HAP-1 (cell line): ENCODE measurements at regions of chr3 and their contacts with region 1.

Region 1: GRCh38 chr3:160038862-160039562 is 50.4 kb downstream of the IL12A start:
- DNase-seq: peak in 1 of 2 experiments; percentile 55
- H3K4me3 ChIP-seq: peak overlapping the region; percentile 9
- H3K4me1 ChIP-seq: no peaks in the 10 kb centered on the region; the same call in 1 of the 2 replicates
- H3K27me3 ChIP-seq: no peaks in the 10 kb centered on the region

Region 2: GRCh38 chr3:160343132-160343531 is 304.1 kb after region 1 on chr3:
- in situ Hi-C with region 1: loop called (anchors 10 kb)
- DNase-seq: peak in 1 of 2 experiments; percentile 62
- H3K4me3 ChIP-seq: no peak overlapping the region
- H3K4me1 ChIP-seq: no peaks in the 10 kb centered on the region
- H3K27me3 ChIP-seq: no peaks in the 10 kb centered on the region